ENCODE measurements at regions of chr12 and their contacts with region 1.

Region 1: GRCh38 chr12:3073438-3074250 is 3.5 kb upstream of the TSPAN9 start:
- H3K4me3 Mint-ChIP-seq: no peak overlapping the region
- H3K27ac Mint-ChIP-seq: no peak overlapping the region
- H3K4me1 Mint-ChIP-seq: peaks cover 5% of the 10 kb centered on the region
- H3K27me3 Mint-ChIP-seq: peaks cover 56% of the 10 kb centered on the region

Region 2: GRCh38 chr12:3202734-3203446 is 129.2 kb after region 1 on chr12:
- intact Hi-C with region 1: loop called (anchors 10 kb)
- H3K4me3 Mint-ChIP-seq: no peak overlapping the region
- H3K27ac Mint-ChIP-seq: no peak overlapping the region
- H3K4me1 Mint-ChIP-seq: peaks cover 21% of the 10 kb centered on the region
- H3K27me3 Mint-ChIP-seq: peaks cover 55% of the 10 kb centered on the region